ENCODE measurements at regions of chr17 and their contacts with region 1.

Region 1: GRCh38 chr17:50853015-50853615 is 13.0 kb downstream of the TOB1 start:
- DNase-seq: no peak
- H3K4me3 ChIP-seq: no peak overlapping the region
- H3K27ac ChIP-seq: peak overlapping the region in 1 of 4 donors; percentile 78
- H3K4me1 ChIP-seq: peaks cover 5 to 24% (median 18%) of the 10 kb centered on the region in 3 donors
- H3K27me3 ChIP-seq: no peaks in the 10 kb centered on the region
- CTCF ChIP-seq: no peak
- POLR2A ChIP-seq: no peak

Region 2: DNA sequence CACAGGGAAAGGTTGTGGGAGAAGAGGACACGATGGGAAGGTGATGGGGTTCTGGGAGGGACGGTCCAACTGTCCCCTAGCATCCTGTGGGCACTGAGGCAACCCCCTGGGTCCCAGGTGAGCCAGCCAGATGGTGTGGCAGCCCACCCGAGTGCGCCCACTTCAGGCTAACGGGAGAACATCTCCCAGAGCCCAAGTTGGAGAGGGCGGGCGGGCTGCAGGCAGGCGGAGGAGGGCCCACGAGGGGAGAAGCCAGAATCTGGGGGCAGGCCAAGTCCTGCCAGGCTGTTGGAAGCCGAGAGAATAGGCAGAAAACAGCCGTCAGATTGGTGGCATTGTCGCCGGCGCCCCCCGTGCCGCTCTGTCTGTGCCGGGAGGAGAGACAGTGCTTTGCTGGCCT is 232.3 kb before region 1 on chr17:
- intact Hi-C with region 1: no loop called
- DNase-seq: no peak
- H3K4me3 ChIP-seq: no peak overlapping the region
- H3K27ac ChIP-seq: no peak overlapping the region
- H3K4me1 ChIP-seq: peaks cover 0 to 1% (median 0%) of the 10 kb centered on the region in 3 donors
- H3K27me3 ChIP-seq: peaks cover 0 to 37% (median 0%) of the 10 kb centered on the region in 4 donors
- CTCF ChIP-seq: no peak
- POLR2A ChIP-seq: no peak

Region 3: GRCh38 chr17:50638851-50639767 is 214.0 kb before region 1 on chr17:
- intact Hi-C with region 1: no loop called
- DNase-seq: peak; percentile 21
- H3K4me3 ChIP-seq: no peak overlapping the region
- H3K27ac ChIP-seq: peak overlapping the region; percentile 53 to 84 (median 70)
- H3K4me1 ChIP-seq: peaks cover 47 to 97% (median 51%) of the 10 kb centered on the region in 3 donors
- H3K27me3 ChIP-seq: peaks cover 0 to 39% (median 0%) of the 10 kb centered on the region in 4 donors
- CTCF ChIP-seq: no peak
- POLR2A ChIP-seq: no peak

Region 4: DNA sequence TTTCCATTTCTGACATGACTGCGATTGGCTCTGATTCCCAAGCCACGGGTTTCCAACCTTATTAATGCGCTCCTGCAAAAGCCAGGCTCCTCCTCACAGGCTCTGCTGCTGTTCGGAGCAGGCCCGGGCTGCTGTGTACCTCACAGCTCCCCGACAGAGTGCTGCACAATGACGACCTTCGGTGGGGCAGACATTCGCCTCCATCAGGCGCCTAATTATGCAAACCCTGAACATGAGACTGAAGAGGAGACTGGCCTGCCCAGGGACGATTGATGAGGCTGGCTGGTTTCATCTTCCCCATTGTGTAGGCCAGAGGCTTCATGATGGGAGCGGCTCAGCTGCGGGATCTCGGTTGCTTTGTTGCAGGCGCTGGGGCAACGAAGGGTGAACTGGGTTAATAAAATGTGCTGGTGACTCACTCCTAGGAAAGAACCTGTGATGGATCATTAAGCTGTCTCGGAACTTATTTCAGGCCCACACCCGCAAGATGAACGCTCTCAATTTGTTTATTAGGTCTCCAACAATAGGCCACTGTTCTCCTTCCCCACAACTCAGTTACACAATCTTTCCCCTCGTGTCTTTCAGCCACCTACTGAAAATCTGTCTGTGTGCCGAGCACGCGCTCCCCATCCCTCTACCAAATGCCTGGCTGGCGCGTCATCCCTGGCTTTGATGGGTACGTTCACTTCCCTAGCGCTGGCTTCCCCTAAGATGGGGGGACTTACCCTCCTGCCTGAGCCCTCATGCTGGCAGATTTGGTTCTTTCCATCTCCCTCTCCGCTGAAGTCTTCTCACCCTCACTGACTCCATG is 40.3 kb after region 1 on chr17:
- intact Hi-C with region 1: no loop called
- DNase-seq: no peak
- H3K4me3 ChIP-seq: peak overlapping the region in 1 of 4 donors; percentile 34
- H3K27ac ChIP-seq: peak overlapping the region; percentile 55 to 74 (median 70)
- H3K4me1 ChIP-seq: peaks cover 3 to 43% (median 11%) of the 10 kb centered on the region in 3 donors
- H3K27me3 ChIP-seq: no peaks in the 10 kb centered on the region
- CTCF ChIP-seq: no peak
- POLR2A ChIP-seq: no peak

Region 5: GRCh38 chr17:50956750-50957523 is 103.8 kb after region 1 on chr17:
- intact Hi-C with region 1: loop called (anchors 5 kb)
- DNase-seq: no peak
- H3K4me3 ChIP-seq: no peak overlapping the region
- H3K27ac ChIP-seq: peak overlapping the region in 3 of 4 donors; percentile 37 to 77 (median 57)
- H3K4me1 ChIP-seq: peaks cover 12 to 44% (median 23%) of the 10 kb centered on the region in 3 donors
- H3K27me3 ChIP-seq: no peaks in the 10 kb centered on the region
- CTCF ChIP-seq: peak; percentile 54 to 83 (median 72)
- POLR2A ChIP-seq: no peak

Measured in esophagus squamous epithelium (tissue), 5 donors.